ENCODE measurements at regions of chr2 and their contacts with region 1.

Region 1: GRCh38 chr2:25966538-25967265 is 15.6 kb downstream of the KIF3C start:
- DNase-seq: no peak
- H3K4me3 ChIP-seq: no peak overlapping the region
- H3K27ac ChIP-seq: peak overlapping the region; percentile 32
- H3K4me1 ChIP-seq: peaks cover 18% of the 10 kb centered on the region
- H3K27me3 ChIP-seq: no peaks in the 10 kb centered on the region
- CTCF ChIP-seq: no peak

Region 2: DNA sequence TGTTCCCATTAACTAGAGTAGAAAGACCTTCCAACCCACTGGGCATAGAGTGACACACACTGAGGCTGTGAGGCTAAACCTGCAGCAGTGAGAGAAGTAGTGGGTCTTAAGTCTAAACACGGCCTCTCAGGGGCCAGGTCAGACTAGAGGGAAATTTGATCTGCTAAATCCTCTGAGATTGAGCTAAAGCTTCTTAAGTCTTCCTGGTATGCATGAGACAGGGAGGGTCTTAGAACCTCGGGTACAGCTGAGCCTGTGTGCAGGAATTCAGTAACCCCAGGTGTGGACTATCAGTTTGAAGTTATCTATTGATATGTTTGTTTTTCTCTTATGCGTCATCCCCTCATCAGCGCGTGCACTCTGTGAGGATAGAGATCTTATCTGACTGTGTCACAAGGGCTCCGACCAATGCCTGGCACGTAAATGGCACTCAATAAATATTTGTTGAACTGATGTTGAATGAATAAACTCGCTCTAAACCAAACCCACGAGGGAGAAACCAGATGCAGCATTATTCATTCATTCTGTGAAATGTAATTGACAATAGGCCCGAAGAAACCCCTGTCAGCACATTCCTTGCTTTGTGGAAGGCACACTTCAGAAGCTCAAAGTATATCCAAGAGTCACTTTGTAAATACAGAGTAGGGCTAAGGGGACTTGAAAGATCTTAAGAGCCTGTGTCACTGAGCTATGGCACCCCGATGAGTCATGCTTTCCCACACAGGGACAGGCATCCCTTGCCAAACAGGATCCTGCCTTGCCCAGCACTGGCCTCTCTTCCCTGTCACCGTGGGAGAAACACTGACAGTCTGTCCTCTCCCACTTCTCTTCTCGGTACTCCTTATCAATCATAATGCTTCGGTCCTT is 45.5 kb after region 1 on chr2:
- CTCF ChIA-PET with region 1: no interaction called
- POLR2A ChIA-PET with region 1: interaction called, 20 read pairs
- intact Hi-C with region 1: no loop called
- DNase-seq: peak; percentile 70
- H3K4me3 ChIP-seq: no peak overlapping the region
- H3K27ac ChIP-seq: peak overlapping the region; percentile 61
- H3K4me1 ChIP-seq: peaks cover 21% of the 10 kb centered on the region
- H3K27me3 ChIP-seq: no peaks in the 10 kb centered on the region
- CTCF ChIP-seq: no peak

Region 3: GRCh38 chr2:26178746-26179436 is 212.2 kb after region 1 on chr2:
- CTCF ChIA-PET with region 1: no interaction called
- POLR2A ChIA-PET with region 1: no interaction called
- intact Hi-C with region 1: no loop called
- DNase-seq: no peak
- H3K4me3 ChIP-seq: peak overlapping the region; percentile 26
- H3K27ac ChIP-seq: no peak overlapping the region
- H3K4me1 ChIP-seq: peaks cover 5% of the 10 kb centered on the region
- H3K27me3 ChIP-seq: no peaks in the 10 kb centered on the region
- CTCF ChIP-seq: no peak

Measured in A673 (cell line).